ENCODE measurements at regions of chr11 and their contacts with region 1.

Region 1: DNA sequence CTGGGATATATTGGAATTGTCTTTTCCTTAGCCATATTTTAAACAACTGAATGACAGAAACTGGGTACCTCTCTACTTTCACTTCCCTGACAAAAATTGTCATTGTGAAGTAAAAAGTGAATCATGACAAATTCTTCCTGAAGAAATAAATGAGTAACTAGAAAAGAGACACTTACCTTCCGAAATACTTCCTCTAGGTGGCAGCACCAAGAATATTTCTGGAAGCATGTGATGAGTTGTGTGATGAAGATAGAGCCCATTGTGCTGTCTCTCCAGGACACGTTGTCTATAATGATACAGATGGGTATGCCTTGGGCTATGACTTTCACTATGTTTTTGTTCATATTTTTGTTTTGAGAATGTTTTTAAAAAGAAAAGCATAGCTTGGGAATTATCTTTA is 21.5 kb downstream of the CASP4 start:
- DNase-seq: peak; percentile 78
- ATAC-seq: peak; percentile 89
- H3K4me3 ChIP-seq: no peak overlapping the region
- H3K27ac ChIP-seq: no peak overlapping the region
- H3K4me1 ChIP-seq: peaks cover 15% of the 10 kb centered on the region
- H3K27me3 ChIP-seq: no peaks in the 10 kb centered on the region
- CTCF ChIP-seq: peak; percentile 54
- EP300 ChIP-seq: no peak
- POLR2A ChIP-seq: no peak
- RAD21 ChIP-seq: peak; percentile 62

Region 2: GRCh38 chr11:104556606-104557301 is 390.2 kb before region 1 on chr11:
- CTCF ChIA-PET with region 1: no interaction called
- POLR2A ChIA-PET with region 1: no interaction called
- in situ Hi-C with region 1: no loop called
- intact Hi-C with region 1: no loop called
- DNase-seq: no peak
- ATAC-seq: no peak
- H3K4me3 ChIP-seq: no peak overlapping the region
- H3K27ac ChIP-seq: no peak overlapping the region
- H3K4me1 ChIP-seq: no peaks in the 10 kb centered on the region
- H3K27me3 ChIP-seq: no peaks in the 10 kb centered on the region
- CTCF ChIP-seq: no peak
- EP300 ChIP-seq: no peak
- POLR2A ChIP-seq: no peak
- RAD21 ChIP-seq: no peak

Region 3: GRCh38 chr11:104843150-104843836 is 103.6 kb before region 1 on chr11:
- CTCF ChIA-PET with region 1: no interaction called
- POLR2A ChIA-PET with region 1: no interaction called
- in situ Hi-C with region 1: no loop called
- intact Hi-C with region 1: no loop called
- DNase-seq: no peak
- ATAC-seq: no peak
- H3K4me3 ChIP-seq: no peak overlapping the region
- H3K27ac ChIP-seq: no peak overlapping the region
- H3K4me1 ChIP-seq: no peaks in the 10 kb centered on the region
- H3K27me3 ChIP-seq: no peaks in the 10 kb centered on the region; a peak in 1 of 5 replicates
- CTCF ChIP-seq: no peak
- EP300 ChIP-seq: no peak
- POLR2A ChIP-seq: no peak
- RAD21 ChIP-seq: no peak

Region 4: DNA sequence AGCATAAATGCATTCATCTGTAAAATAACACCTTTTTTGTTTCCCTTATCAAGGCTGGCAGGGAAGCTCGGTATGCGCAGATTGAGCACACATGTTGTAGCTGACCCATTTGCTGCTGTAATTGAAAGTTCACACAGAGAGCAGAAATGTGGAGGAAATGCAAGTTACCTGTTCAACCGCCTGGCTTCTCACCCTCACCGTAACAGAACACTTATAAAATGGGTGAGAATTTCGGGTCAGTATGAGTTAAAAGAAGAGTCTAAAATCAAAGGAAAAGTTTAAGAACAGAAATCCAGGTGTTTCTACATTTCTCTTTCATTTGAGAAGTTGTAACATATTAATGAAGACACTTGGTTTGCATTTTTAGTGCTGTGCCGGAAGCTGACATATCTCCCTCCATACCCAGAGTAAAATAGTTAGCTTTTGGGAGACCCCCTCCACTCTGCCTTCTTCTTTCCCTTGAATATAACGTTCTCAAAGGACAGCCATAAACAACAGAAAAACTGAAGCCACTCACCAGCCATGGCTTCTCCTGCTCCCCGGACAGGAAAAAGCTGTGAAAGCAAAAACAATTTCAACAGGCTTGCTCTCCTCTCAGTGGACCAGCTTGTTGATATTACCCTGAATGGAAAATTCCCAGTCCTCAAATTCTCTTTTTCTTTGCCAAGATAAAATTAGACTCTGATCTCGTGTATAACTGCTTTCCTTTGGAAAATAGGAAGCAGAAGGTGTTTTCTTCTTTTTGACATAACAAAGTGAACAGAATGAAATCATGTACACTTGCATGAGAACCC is 48.8 kb before region 1 on chr11 and contains the start of gene CASP12:
- CTCF ChIA-PET with region 1: no interaction called
- POLR2A ChIA-PET with region 1: no interaction called
- in situ Hi-C with region 1: no loop called
- intact Hi-C with region 1: no loop called
- DNase-seq: no peak
- ATAC-seq: no peak
- H3K4me3 ChIP-seq: no peak within 1 kb of the TSS
- H3K27ac ChIP-seq: no peak within 1 kb of the TSS
- H3K4me1 ChIP-seq: no peaks in the 10 kb centered on the region
- H3K27me3 ChIP-seq: no peaks in the 10 kb centered on the region
- CTCF ChIP-seq: no peak
- EP300 ChIP-seq: no peak
- POLR2A ChIP-seq: no peak
- RAD21 ChIP-seq: no peak
- total RNA-seq, gene CASP12: not detected in 2 replicates

Region 5: DNA sequence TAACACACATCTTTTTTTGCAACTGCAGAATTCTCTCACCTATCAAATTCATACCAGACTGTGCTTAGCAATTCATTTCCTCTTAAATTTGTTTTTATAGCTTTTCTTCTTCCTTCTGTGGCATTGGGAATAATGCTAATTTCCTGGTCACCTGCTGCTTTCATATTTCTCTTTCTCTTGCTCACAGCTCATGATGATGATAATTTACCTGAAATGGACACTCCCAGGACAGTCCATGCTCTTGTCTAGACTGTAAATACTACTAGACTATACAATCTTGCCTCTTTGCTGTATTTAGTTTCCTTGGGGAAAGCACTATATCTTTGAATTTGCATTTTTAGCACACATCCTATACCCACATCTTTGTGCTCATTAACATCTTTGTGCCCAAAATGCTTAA is 60.6 kb after region 1 on chr11:
- CTCF ChIA-PET with region 1: no interaction called
- POLR2A ChIA-PET with region 1: no interaction called
- in situ Hi-C with region 1: no loop called
- intact Hi-C with region 1: no loop called
- DNase-seq: no peak
- ATAC-seq: no peak
- H3K4me3 ChIP-seq: no peak overlapping the region
- H3K27ac ChIP-seq: no peak overlapping the region
- H3K4me1 ChIP-seq: peaks cover 18% of the 10 kb centered on the region
- H3K27me3 ChIP-seq: no peaks in the 10 kb centered on the region; a peak in 1 of 5 replicates
- CTCF ChIP-seq: no peak
- EP300 ChIP-seq: no peak
- POLR2A ChIP-seq: no peak
- RAD21 ChIP-seq: no peak

Region 6: DNA sequence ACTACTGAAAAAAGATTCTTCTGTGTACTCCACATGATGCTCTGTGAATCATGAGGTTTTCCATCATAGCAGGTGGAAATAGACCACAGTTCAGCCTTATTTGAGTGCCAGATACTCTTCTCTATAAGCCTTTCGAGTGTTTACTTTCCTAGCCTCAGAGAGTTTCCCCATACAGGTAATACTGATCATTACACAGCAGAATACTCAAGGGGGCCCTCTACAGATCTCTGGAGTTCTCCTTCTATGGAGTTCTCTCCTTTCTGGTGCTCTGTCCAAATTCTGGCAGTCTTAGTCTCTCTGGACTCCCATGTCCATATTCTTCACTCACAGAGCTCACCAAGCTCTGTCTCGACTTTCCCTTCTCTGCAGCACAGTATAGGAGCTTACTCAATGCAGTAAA is 368.4 kb after region 1 on chr11:
- CTCF ChIA-PET with region 1: no interaction called
- POLR2A ChIA-PET with region 1: no interaction called
- in situ Hi-C with region 1: no loop called
- intact Hi-C with region 1: loop called (anchors 10 kb)
- DNase-seq: peak; percentile 15
- ATAC-seq: peak; percentile 90
- H3K4me3 ChIP-seq: no peak overlapping the region
- H3K27ac ChIP-seq: no peak overlapping the region
- H3K4me1 ChIP-seq: no peaks in the 10 kb centered on the region
- H3K27me3 ChIP-seq: no peaks in the 10 kb centered on the region
- CTCF ChIP-seq: no peak
- EP300 ChIP-seq: no peak
- POLR2A ChIP-seq: no peak
- RAD21 ChIP-seq: no peak